ENCODE measurements at regions of chr17 and their contacts with region 1.

Region 1: DNA sequence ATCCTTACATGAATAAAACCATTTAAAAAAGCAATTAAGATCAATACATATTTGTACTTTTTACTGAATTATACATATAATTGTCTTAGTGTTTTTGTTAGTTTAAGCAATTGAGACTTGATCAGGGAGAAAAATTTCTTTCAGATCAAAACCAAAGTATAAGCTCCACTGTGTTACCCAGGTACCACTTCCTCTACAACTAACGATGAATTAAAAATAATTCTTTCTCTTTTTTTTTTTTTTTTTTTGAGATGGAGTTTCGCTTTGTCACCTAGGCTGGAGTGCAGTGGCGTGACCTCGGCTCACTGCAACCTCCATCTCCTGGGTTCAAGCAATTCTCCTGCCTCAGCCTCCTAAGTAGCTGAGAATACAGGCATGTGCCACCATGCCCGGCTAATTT is 6.8 kb downstream of the FBXO47 start:
- DNase-seq: peak in 2 of 9 experiments; percentile 17 to 50
- ATAC-seq: peak; percentile 80
- H3K4me3 ChIP-seq: no peak overlapping the region
- H3K4me3 Mint-ChIP-seq: peak overlapping the region; percentile 35
- H3K27ac ChIP-seq: peak overlapping the region in 1 of 2 experiments; percentile 46
- H3K27ac Mint-ChIP-seq: peak overlapping the region; percentile 71
- H3K4me1 ChIP-seq: peaks cover 37% of the 10 kb centered on the region
- H3K4me1 Mint-ChIP-seq: peaks cover 29% of the 10 kb centered on the region
- H3K27me3 ChIP-seq: no peaks in the 10 kb centered on the region
- H3K27me3 Mint-ChIP-seq: no peaks in the 10 kb centered on the region
- CTCF ChIP-seq: no peak

Region 2: GRCh38 chr17:38922538-38923297 is 37.7 kb before region 1 on chr17:
- CTCF ChIA-PET with region 1: no interaction called
- POLR2A ChIA-PET with region 1: interaction called, 3 read pairs
- intact Hi-C with region 1: loop called in 1 of 2 experiments (anchors 5 kb)
- DNase-seq: peak in 2 of 9 experiments; percentile 9 to 48
- ATAC-seq: no peak
- H3K4me3 ChIP-seq: no peak overlapping the region
- H3K4me3 Mint-ChIP-seq: no peak overlapping the region
- H3K27ac ChIP-seq: peak overlapping the region in 1 of 2 experiments; percentile 51
- H3K27ac Mint-ChIP-seq: peak overlapping the region; percentile 66
- H3K4me1 ChIP-seq: peaks cover 26% of the 10 kb centered on the region
- H3K4me1 Mint-ChIP-seq: peaks cover 45% of the 10 kb centered on the region
- H3K27me3 ChIP-seq: no peaks in the 10 kb centered on the region
- H3K27me3 Mint-ChIP-seq: no peaks in the 10 kb centered on the region
- CTCF ChIP-seq: no peak

Region 3: DNA sequence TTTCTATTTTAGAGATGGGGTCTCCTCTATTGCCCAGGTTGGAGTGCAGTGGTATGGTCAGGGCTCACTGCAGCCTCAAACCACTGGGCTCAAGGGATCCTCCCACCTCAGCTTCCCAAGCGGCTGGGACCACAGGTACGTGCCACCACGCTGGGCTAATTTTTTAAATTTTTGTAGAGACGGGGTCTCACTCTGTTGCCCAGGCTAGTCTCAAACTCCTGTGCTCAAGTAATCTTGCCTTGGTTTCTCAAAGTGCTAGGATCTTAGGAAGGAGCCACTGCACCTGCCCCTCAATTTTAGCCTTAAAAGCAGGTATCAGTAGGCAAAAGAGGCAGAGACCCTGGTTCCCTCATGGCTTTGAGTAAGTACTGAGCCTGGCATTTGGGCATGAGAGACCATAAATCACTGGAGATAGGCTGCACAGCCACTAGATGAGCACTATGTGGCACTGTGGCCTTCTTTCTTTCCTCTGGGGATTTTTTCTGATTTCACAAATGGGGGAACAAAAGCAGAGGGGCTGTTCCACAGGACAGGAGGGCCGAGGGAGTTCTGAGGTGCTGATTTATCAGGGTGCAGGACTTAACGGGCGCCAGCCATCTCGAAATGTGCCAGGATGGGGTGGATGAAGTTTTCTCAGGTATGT is 108.8 kb after region 1 on chr17:
- CTCF ChIA-PET with region 1: no interaction called
- POLR2A ChIA-PET with region 1: no interaction called
- intact Hi-C with region 1: no loop called
- DNase-seq: peak in 7 of 9 experiments; percentile 2 to 76 (median 32)
- ATAC-seq: peak; percentile 96
- H3K4me3 ChIP-seq: no peak overlapping the region
- H3K4me3 Mint-ChIP-seq: no peak overlapping the region
- H3K27ac ChIP-seq: no peak overlapping the region
- H3K27ac Mint-ChIP-seq: peak overlapping the region; percentile 57
- H3K4me1 ChIP-seq: no peaks in the 10 kb centered on the region
- H3K4me1 Mint-ChIP-seq: peaks cover 5% of the 10 kb centered on the region
- H3K27me3 ChIP-seq: no peaks in the 10 kb centered on the region
- H3K27me3 Mint-ChIP-seq: no peaks in the 10 kb centered on the region
- CTCF ChIP-seq: peak; percentile 65

Measured in CD8-positive, alpha-beta T cell (primary cell).